Naive thymus-derived CD4-positive, alpha-beta T cell (primary cell): ENCODE measurements at regions of chr3 and their contacts with region 1.

Region 1: GRCh38 chr3:18469775-18470174 is 44.6 kb upstream of the SATB1 start:
- DNase-seq: no peak
- ATAC-seq: no peak
- H3K4me3 ChIP-seq: no peak overlapping the region
- H3K4me3 Mint-ChIP-seq: no peak overlapping the region
- H3K27ac ChIP-seq: no peak overlapping the region
- H3K27ac Mint-ChIP-seq: peak overlapping the region in 3 of 9 donors; percentile 18 to 55 (median 43)
- H3K4me1 ChIP-seq: no peaks in the 10 kb centered on the region
- H3K4me1 Mint-ChIP-seq: peaks cover 8 to 48% (median 30%) of the 10 kb centered on the region in 7 donors
- H3K27me3 ChIP-seq: no peaks in the 10 kb centered on the region
- H3K27me3 Mint-ChIP-seq: no peaks in the 10 kb centered on the region

Region 2: DNA sequence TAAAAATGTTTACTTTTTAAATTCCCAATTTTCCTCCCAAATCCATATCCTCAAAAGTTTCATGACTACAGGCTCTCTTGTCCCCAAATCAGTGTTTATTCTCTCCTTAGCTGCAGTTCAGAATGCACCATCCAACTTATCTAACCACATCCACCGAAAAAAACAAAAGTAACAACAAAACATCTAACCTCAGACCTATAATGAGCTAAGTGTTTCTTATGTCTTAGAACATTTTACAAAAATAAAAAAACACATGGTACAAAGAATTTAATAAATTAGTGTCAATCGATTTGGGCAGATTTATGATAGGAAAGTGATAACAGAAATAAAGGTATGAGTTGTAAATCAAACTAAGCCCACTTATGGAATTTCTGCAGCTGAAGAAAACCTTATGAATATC is 58.2 kb before region 1 on chr3:
- CTCF ChIA-PET with region 1: no interaction called
- POLR2A ChIA-PET with region 1: no interaction called
- intact Hi-C with region 1: no loop called
- DNase-seq: peak in 7 of 9 donors; percentile 46 to 80 (median 68)
- ATAC-seq: peak; percentile 83
- H3K4me3 ChIP-seq: peak overlapping the region; percentile 9
- H3K4me3 Mint-ChIP-seq: peak overlapping the region; percentile 46 to 88 (median 76)
- H3K27ac ChIP-seq: peak overlapping the region; percentile 55
- H3K27ac Mint-ChIP-seq: peak overlapping the region; percentile 75 to 97 (median 86)
- H3K4me1 ChIP-seq: peaks cover 13 to 87% of the 10 kb centered on the region in 2 donors
- H3K4me1 Mint-ChIP-seq: peaks cover 35 to 98% (median 89%) of the 10 kb centered on the region in 7 donors
- H3K27me3 ChIP-seq: no peaks in the 10 kb centered on the region
- H3K27me3 Mint-ChIP-seq: no peaks in the 10 kb centered on the region

Region 3: DNA sequence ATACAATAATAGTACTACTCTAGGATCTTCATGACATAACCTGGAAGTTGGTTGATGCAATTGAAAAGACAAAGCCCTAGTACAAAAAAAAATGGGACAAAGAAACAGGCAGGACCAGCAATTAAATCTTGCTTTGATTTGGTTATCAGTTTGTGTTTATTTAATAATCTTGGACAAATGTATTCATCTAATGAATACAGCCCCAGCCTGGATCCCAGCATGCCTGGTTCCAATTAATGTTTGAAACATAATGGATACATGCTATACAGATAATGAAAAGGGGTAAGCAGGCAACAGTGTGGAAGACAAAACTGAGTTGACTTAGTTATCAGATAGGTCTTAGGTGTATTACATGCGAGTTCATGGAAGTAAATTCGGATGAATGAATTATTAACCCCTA is 15.0 kb before region 1 on chr3:
- CTCF ChIA-PET with region 1: no interaction called
- POLR2A ChIA-PET with region 1: interaction called, 3 read pairs
- intact Hi-C with region 1: loop called in 1 of 2 experiments (anchors 2 kb)
- DNase-seq: no peak
- ATAC-seq: no peak
- H3K4me3 ChIP-seq: no peak overlapping the region
- H3K4me3 Mint-ChIP-seq: peak overlapping the region in 1 of 10 donors; percentile 5
- H3K27ac ChIP-seq: no peak overlapping the region
- H3K27ac Mint-ChIP-seq: peak overlapping the region in 1 of 9 donors; percentile 18
- H3K4me1 ChIP-seq: peaks cover 0 to 10% of the 10 kb centered on the region in 2 donors
- H3K4me1 Mint-ChIP-seq: peaks cover 14 to 93% (median 80%) of the 10 kb centered on the region in 7 donors
- H3K27me3 ChIP-seq: no peaks in the 10 kb centered on the region
- H3K27me3 Mint-ChIP-seq: no peaks in the 10 kb centered on the region

Region 4: GRCh38 chr3:18489939-18490338 is 20.2 kb after region 1 on chr3:
- CTCF ChIA-PET with region 1: interaction called, 3 read pairs
- POLR2A ChIA-PET with region 1: no interaction called
- intact Hi-C with region 1: loop called in 1 of 2 experiments (anchors 2 kb)
- DNase-seq: peak in 7 of 9 donors; percentile 6 to 40 (median 16)
- ATAC-seq: peak; percentile 24
- H3K4me3 ChIP-seq: peak overlapping the region; percentile 3
- H3K4me3 Mint-ChIP-seq: peak overlapping the region in 7 of 10 donors; percentile 39 to 77 (median 64)
- H3K27ac ChIP-seq: no peak overlapping the region
- H3K27ac Mint-ChIP-seq: peak overlapping the region in 8 of 9 donors; percentile 12 to 92 (median 54)
- H3K4me1 ChIP-seq: peaks cover 10 to 11% of the 10 kb centered on the region in 2 donors
- H3K4me1 Mint-ChIP-seq: peaks cover 15 to 55% (median 32%) of the 10 kb centered on the region in 7 donors
- H3K27me3 ChIP-seq: no peaks in the 10 kb centered on the region
- H3K27me3 Mint-ChIP-seq: no peaks in the 10 kb centered on the region

Region 5: GRCh38 chr3:18575573-18575972 is 105.8 kb after region 1 on chr3:
- CTCF ChIA-PET with region 1: no interaction called
- POLR2A ChIA-PET with region 1: no interaction called
- intact Hi-C with region 1: no loop called
- DNase-seq: no peak
- ATAC-seq: no peak
- H3K4me3 ChIP-seq: no peak overlapping the region
- H3K4me3 Mint-ChIP-seq: no peak overlapping the region
- H3K27ac ChIP-seq: no peak overlapping the region
- H3K27ac Mint-ChIP-seq: no peak overlapping the region
- H3K4me1 ChIP-seq: no peaks in the 10 kb centered on the region
- H3K4me1 Mint-ChIP-seq: peaks cover 4 to 24% (median 12%) of the 10 kb centered on the region in 7 donors
- H3K27me3 ChIP-seq: no peaks in the 10 kb centered on the region
- H3K27me3 Mint-ChIP-seq: no peaks in the 10 kb centered on the region